GM18951 (cell line): ENCODE measurements at regions of chr12 and their contacts with region 1.

Region 1: GRCh38 chr12:99658671-99659349 is 11.3 kb downstream of the GARIN6 start:
- POLR2A ChIP-seq: no peak

Region 2: GRCh38 chr12:99043319-99043914 is 615.4 kb before region 1 on chr12:
- in situ Hi-C with region 1: loop called (anchors 10 kb)
- POLR2A ChIP-seq: no peak